Right lobe of liver (tissue), 6 donors: ENCODE measurements at regions of chr11 and their contacts with region 1.

Region 1: GRCh38 chr11:123478352-123478987 is 48.4 kb downstream of the GRAMD1B start:
- DNase-seq: no peak
- ATAC-seq: peak; percentile 75 to 83 (median 78)
- H3K4me3 ChIP-seq: no peak overlapping the region
- H3K27ac ChIP-seq: no peak overlapping the region
- H3K4me1 ChIP-seq: no peaks in the 10 kb centered on the region
- H3K27me3 ChIP-seq: no peaks in the 10 kb centered on the region
- CTCF ChIP-seq: peak; percentile 61 to 66 (median 62)
- POLR2A ChIP-seq: no peak

Region 2: GRCh38 chr11:123301696-123302400 is 176.6 kb before region 1 on chr11:
- intact Hi-C with region 1: loop called in 1 of 2 experiments (anchors 10 kb)
- DNase-seq: peak; percentile 57 to 71 (median 61)
- ATAC-seq: peak; percentile 83 to 95 (median 92)
- H3K4me3 ChIP-seq: peak overlapping the region; percentile 4 to 39 (median 30)
- H3K27ac ChIP-seq: no peak overlapping the region
- H3K4me1 ChIP-seq: peaks cover 0 to 15% (median 2%) of the 10 kb centered on the region in 4 donors
- H3K27me3 ChIP-seq: no peaks in the 10 kb centered on the region
- CTCF ChIP-seq: peak; percentile 50 to 94 (median 81)
- POLR2A ChIP-seq: no peak

Region 3: DNA sequence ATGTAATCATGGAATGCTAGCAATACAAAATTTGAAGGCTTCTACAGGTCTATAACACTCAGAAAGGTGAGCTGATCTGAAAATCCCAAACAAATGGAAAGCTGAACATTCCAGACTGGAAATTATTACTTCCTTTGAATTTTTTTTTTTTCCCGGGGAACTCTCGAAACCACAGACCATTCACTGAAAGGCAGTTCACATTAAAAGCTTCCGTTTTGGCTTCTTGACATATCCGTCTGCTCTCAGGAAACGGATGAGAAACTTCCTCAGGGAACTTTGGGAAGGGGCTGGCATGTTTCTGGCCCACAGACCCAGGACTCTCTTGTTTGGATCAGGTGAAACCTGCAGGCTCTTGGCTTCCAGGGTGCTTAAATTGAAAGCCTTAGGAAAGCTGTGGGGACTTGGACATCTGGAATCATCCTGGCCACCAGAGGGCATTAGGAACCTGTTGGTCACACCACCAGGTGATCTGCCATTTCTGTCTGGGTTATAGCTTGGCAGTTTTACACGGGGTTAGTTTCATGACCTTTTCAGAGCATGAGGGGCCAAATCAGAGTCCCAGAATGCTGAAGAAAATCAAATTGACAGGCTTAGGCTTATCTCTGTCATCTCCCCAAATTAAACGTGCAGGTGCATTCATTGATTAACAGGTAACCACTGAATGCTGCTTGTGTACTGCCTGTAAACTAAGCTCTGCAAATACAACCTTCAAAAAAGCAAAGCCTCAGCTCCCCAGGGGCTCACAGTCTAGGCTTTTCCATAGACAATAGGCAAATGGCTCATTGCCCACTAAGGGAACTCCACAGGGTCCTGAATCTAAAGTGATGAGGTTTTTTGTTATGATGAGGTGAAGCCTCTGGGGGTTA is 71.1 kb before region 1 on chr11:
- intact Hi-C with region 1: loop called (anchors 5 kb)
- DNase-seq: peak in 2 of 3 donors; percentile 48 to 68
- ATAC-seq: peak; percentile 86 to 98 (median 94)
- H3K4me3 ChIP-seq: no peak overlapping the region
- H3K27ac ChIP-seq: no peak overlapping the region
- H3K4me1 ChIP-seq: no peaks in the 10 kb centered on the region
- H3K27me3 ChIP-seq: no peaks in the 10 kb centered on the region
- CTCF ChIP-seq: peak; percentile 56 to 72 (median 69)
- POLR2A ChIP-seq: no peak

Region 4: GRCh38 chr11:123413636-123414035 is 64.8 kb before region 1 on chr11:
- intact Hi-C with region 1: loop called (anchors 5 kb)
- DNase-seq: no peak
- ATAC-seq: no peak
- H3K4me3 ChIP-seq: no peak overlapping the region
- H3K27ac ChIP-seq: no peak overlapping the region
- H3K4me1 ChIP-seq: no peaks in the 10 kb centered on the region
- H3K27me3 ChIP-seq: no peaks in the 10 kb centered on the region
- CTCF ChIP-seq: no peak
- POLR2A ChIP-seq: no peak

Region 5: GRCh38 chr11:123547180-123547579 is 68.7 kb after region 1 on chr11:
- intact Hi-C with region 1: no loop called
- DNase-seq: no peak
- ATAC-seq: peak in 2 of 4 donors; percentile 45 to 52
- H3K4me3 ChIP-seq: no peak overlapping the region
- H3K27ac ChIP-seq: no peak overlapping the region
- H3K4me1 ChIP-seq: no peaks in the 10 kb centered on the region
- H3K27me3 ChIP-seq: no peaks in the 10 kb centered on the region
- CTCF ChIP-seq: no peak
- POLR2A ChIP-seq: no peak